Activated CD4-positive, alpha-beta T cell treated with anti-CD3 and anti-CD28 coated beads for 36 hours (primary cell): ENCODE measurements at regions of chr2 and their contacts with region 1.

Region 1: GRCh38 chr2:44167940-44168680 is 565 bp upstream of the PPM1B start:
- DNase-seq: peak; percentile 98
- ATAC-seq: peak; percentile 81
- H3K4me3 Mint-ChIP-seq: peak overlapping the region; percentile 94
- H3K27ac Mint-ChIP-seq: peak overlapping the region; percentile 94
- H3K4me1 Mint-ChIP-seq: peaks cover 29% of the 10 kb centered on the region
- H3K27me3 Mint-ChIP-seq: no peaks in the 10 kb centered on the region

Region 2: GRCh38 chr2:43773876-43774613 is 394.1 kb before region 1 on chr2 and contains the start of gene DYNC2LI1:
- CTCF ChIA-PET with region 1: no interaction called
- POLR2A ChIA-PET with region 1: no interaction called
- intact Hi-C with region 1: loop called in 1 of 2 experiments (anchors 1 kb)
- DNase-seq: peak; percentile 92
- ATAC-seq: peak; percentile 94
- H3K4me3 Mint-ChIP-seq: peak within 1 kb of the TSS; percentile 95
- H3K27ac Mint-ChIP-seq: peak within 1 kb of the TSS; percentile 74
- H3K4me1 Mint-ChIP-seq: peaks cover 29% of the 10 kb centered on the region
- H3K27me3 Mint-ChIP-seq: no peaks in the 10 kb centered on the region
- total RNA-seq, gene DYNC2LI1: 19.5 to 28.4 TPM

Region 3: GRCh38 chr2:44087036-44087713 is 80.9 kb before region 1 on chr2:
- CTCF ChIA-PET with region 1: interaction called, 4 read pairs
- POLR2A ChIA-PET with region 1: no interaction called
- intact Hi-C with region 1: loop called (anchors 1 to 2 kb)
- DNase-seq: peak; percentile 91
- ATAC-seq: peak; percentile 90
- H3K4me3 Mint-ChIP-seq: peak overlapping the region; percentile 67
- H3K27ac Mint-ChIP-seq: peak overlapping the region; percentile 93
- H3K4me1 Mint-ChIP-seq: peaks cover 22% of the 10 kb centered on the region
- H3K27me3 Mint-ChIP-seq: no peaks in the 10 kb centered on the region

Region 4: DNA sequence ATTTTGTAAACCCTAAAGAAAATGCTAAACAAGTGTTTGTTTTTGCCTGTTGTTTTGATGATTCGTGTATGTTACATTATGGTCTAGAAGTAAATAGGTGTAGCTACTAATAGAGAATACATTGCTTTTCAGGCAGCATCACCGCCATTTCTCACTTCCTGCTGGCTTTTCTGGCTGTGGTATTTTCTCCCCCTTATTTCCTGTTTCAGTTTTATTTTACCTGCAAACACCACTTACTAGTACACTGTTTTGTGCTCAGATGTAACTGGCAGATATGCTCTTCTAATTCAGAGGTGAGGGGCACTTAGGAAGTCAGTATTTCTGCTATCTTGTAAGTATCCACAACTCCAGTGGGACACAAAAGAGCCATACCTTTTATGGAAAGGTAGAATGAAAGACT is 69.1 kb after region 1 on chr2:
- CTCF ChIA-PET with region 1: no interaction called
- POLR2A ChIA-PET with region 1: no interaction called
- intact Hi-C with region 1: loop called in 1 of 2 experiments (anchors 5 kb)
- DNase-seq: peak; percentile 33
- ATAC-seq: peak; percentile 81
- H3K4me3 Mint-ChIP-seq: no peak overlapping the region
- H3K27ac Mint-ChIP-seq: peak overlapping the region; percentile 81
- H3K4me1 Mint-ChIP-seq: peaks cover 32% of the 10 kb centered on the region
- H3K27me3 Mint-ChIP-seq: no peaks in the 10 kb centered on the region

Region 5: DNA sequence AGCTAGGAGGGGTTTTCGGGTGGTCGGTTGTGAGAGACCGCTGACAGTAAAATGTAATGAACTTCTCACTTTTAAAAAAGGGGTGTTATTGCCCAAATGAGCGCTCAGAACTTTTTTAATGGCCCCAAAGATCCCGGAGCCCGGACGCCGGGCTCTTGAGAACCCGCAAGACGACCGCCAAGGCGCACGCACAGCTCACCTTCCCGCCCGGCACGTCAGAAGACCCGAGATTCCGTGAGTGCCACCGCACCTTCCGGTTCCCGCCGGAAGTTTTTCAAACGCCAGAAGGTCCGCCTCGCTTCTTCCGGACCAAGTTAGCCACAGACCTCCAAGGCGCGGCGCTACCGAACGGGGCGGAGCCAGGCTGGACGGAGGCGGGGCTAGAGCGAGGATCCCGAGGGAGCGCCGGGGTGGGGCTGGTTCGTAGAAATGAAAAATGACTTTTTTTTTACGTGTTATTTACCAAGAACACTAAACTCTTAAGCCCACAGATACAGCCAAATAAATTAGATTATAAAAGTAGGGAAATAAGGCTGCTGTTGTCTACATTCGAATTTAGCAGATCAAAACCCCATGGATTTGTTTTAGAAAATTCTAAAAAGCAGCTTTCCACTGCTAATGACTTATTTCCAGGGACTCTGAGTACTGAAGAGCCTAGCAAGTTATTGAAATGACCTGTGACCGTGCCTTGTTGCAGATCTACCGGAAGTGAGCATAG is 1443.1 kb after region 1 on chr2 and contains the start of gene SRBD1:
- CTCF ChIA-PET with region 1: no interaction called
- POLR2A ChIA-PET with region 1: no interaction called
- intact Hi-C with region 1: loop called in 1 of 2 experiments (anchors 2 kb)
- DNase-seq: peak; percentile 96
- ATAC-seq: peak; percentile 97
- H3K4me3 Mint-ChIP-seq: peak within 1 kb of the TSS; percentile 93
- H3K27ac Mint-ChIP-seq: peak within 1 kb of the TSS; percentile 94
- H3K4me1 Mint-ChIP-seq: peaks cover 19% of the 10 kb centered on the region
- H3K27me3 Mint-ChIP-seq: no peaks in the 10 kb centered on the region
- total RNA-seq, gene SRBD1: 19.2 to 25.0 TPM